BJ (cell line): ENCODE measurements at regions of chr10 and their contacts with region 1.

Region 1: GRCh38 chr10:103451831-103452505 is at the start of gene CALHM2:
- DNase-seq: no peak
- H3K4me3 ChIP-seq: peak within 1 kb of the TSS; percentile 71
- H3K27me3 ChIP-seq: no peaks in the 10 kb centered on the region
- CTCF ChIP-seq: no peak
- polyA plus RNA-seq, gene CALHM2: 46.0 and 80.1 TPM in 2 replicates

Region 2: GRCh38 chr10:103481974-103482531 is 30.1 kb after region 1 on chr10:
- CTCF ChIA-PET with region 1: interaction called, 32 read pairs
- POLR2A ChIA-PET with region 1: no interaction called
- DNase-seq: no peak
- H3K4me3 ChIP-seq: no peak overlapping the region
- H3K27me3 ChIP-seq: no peaks in the 10 kb centered on the region
- CTCF ChIP-seq: peak; percentile 72

Region 3: GRCh38 chr10:103491493-103492381 is 39.8 kb after region 1 on chr10:
- CTCF ChIA-PET with region 1: interaction called, 32 read pairs
- POLR2A ChIA-PET with region 1: no interaction called
- DNase-seq: peak; percentile 97
- H3K4me3 ChIP-seq: no peak overlapping the region
- H3K27me3 ChIP-seq: peaks cover 12% of the 10 kb centered on the region
- CTCF ChIP-seq: no peak